ENCODE measurements at regions of chr5 and their contacts with region 1.

Region 1: GRCh38 chr5:75681125-75681830 is 36.0 kb downstream of the POC5 start:
- DNase-seq: no peak
- ATAC-seq: no peak
- H3K4me3 ChIP-seq: peak overlapping the region in 2 of 12 donors; percentile 24 to 25
- H3K27ac ChIP-seq: no peak overlapping the region
- H3K4me1 ChIP-seq: peaks cover 0 to 6% (median 0%) of the 10 kb centered on the region in 12 donors
- H3K27me3 ChIP-seq: no peaks in the 10 kb centered on the region
- CTCF ChIP-seq: peak; percentile 65 to 85 (median 76)
- POLR2A ChIP-seq: no peak

Region 2: GRCh38 chr5:75053304-75054133 is 627.8 kb before region 1 on chr5:
- intact Hi-C with region 1: loop called in 1 of 10 experiments (anchors 5 kb)
- DNase-seq: peak; percentile 40 to 75 (median 51)
- ATAC-seq: peak; percentile 29 to 78 (median 72)
- H3K4me3 ChIP-seq: peak overlapping the region; percentile 62 to 96 (median 86)
- H3K27ac ChIP-seq: peak overlapping the region; percentile 75 to 89 (median 84)
- H3K4me1 ChIP-seq: peaks cover 0 to 30% (median 14%) of the 10 kb centered on the region in 12 donors
- H3K27me3 ChIP-seq: peaks cover 0 to 21% (median 0%) of the 10 kb centered on the region in 9 donors
- CTCF ChIP-seq: peak in 3 of 12 donors; percentile 10 to 25 (median 19)
- POLR2A ChIP-seq: no peak

Region 3: GRCh38 chr5:75336625-75337339 is 344.5 kb before region 1 on chr5 and contains the start of gene HMGCR:
- intact Hi-C with region 1: loop called in 4 of 10 experiments (anchors 5 to 10 kb)
- DNase-seq: peak; percentile 99 to 100 (median 99)
- ATAC-seq: peak; percentile 99 to 100 (median 100)
- H3K4me3 ChIP-seq: peak within 1 kb of the TSS; percentile 75 to 99 (median 89)
- H3K27ac ChIP-seq: peak within 1 kb of the TSS; percentile 54 to 98 (median 88)
- H3K4me1 ChIP-seq: peaks cover 0 to 28% (median 14%) of the 10 kb centered on the region in 12 donors
- H3K27me3 ChIP-seq: no peaks in the 10 kb centered on the region
- CTCF ChIP-seq: peak in 5 of 12 donors; percentile 19 to 55 (median 35)
- POLR2A ChIP-seq: peak in 1 of 2 donors; percentile 69
- total RNA-seq, gene HMGCR: 6.0 to 15.2 (median 11.9) TPM

Region 4: DNA sequence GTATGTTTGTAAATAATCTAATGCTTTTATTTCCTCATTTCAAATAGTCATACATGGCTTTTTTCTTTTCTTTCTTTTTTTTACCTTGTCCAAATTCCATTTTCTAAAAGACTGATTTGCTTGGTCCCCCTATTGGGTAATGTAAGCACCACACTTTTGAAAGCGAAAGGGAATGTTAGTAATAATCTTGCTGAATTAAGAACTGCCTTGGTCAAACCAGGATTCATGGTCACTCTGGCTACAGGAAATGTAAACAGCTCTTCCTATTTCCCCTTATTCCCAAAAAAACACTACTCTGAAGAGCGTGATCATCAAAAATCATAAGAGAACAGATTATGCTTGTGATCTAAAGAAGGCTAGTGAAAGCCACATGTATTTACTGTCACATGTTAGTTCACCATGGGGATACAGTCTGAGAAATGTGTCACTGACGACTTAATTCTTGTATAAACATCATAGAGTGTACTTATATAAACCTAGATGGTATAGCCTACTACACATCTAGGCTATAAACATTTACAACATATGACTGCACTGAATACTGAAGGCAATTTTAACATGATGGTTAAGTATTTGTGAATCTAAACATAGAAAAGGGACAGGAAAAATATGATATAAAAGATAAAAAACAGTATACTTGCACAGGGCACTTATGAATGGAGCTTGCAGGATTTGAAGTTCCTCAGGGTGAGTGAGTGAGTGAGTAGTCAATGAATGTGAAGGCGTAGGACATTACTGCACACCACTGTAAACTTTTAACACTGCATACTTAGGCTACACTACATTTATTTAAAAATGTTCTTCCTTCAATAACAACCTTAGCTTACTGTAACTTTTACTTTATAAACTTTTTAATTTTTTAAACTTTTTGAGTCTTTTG is 268.9 kb before region 1 on chr5:
- intact Hi-C with region 1: loop called in 1 of 10 experiments (anchors 10 kb)
- DNase-seq: no peak
- ATAC-seq: peak in 2 of 4 donors; percentile 22 to 27
- H3K4me3 ChIP-seq: no peak overlapping the region
- H3K27ac ChIP-seq: peak overlapping the region in 1 of 12 donors; percentile 36
- H3K4me1 ChIP-seq: no peaks in the 10 kb centered on the region
- H3K27me3 ChIP-seq: no peaks in the 10 kb centered on the region
- CTCF ChIP-seq: no peak
- POLR2A ChIP-seq: no peak

Region 5: GRCh38 chr5:75584641-75585040 is 96.6 kb before region 1 on chr5:
- intact Hi-C with region 1: loop called in 2 of 10 experiments (anchors 1 to 10 kb)
- DNase-seq: no peak
- ATAC-seq: no peak
- H3K4me3 ChIP-seq: no peak overlapping the region
- H3K27ac ChIP-seq: no peak overlapping the region
- H3K4me1 ChIP-seq: peaks cover 0 to 7% (median 0%) of the 10 kb centered on the region in 12 donors
- H3K27me3 ChIP-seq: no peaks in the 10 kb centered on the region
- CTCF ChIP-seq: peak in 3 of 12 donors; percentile 13 to 30 (median 20)
- POLR2A ChIP-seq: no peak